ENCODE measurements at regions of chr7 and their contacts with region 1.

Region 1: GRCh38 chr7:102152672-102153585 is 133.7 kb upstream of the SH2B2 start:
- H3K4me3 ChIP-seq: no peak overlapping the region
- H3K27ac ChIP-seq: no peak overlapping the region
- H3K4me1 ChIP-seq: no peaks in the 10 kb centered on the region; the same call in 1 of the 2 replicates
- CTCF ChIP-seq: no peak

Region 2: GRCh38 chr7:102165136-102165535 is 12.2 kb after region 1 on chr7:
- CTCF ChIA-PET with region 1: no interaction called
- POLR2A ChIA-PET with region 1: interaction called, 11 read pairs
- H3K4me3 ChIP-seq: no peak overlapping the region
- H3K27ac ChIP-seq: no peak overlapping the region
- H3K4me1 ChIP-seq: no peaks in the 10 kb centered on the region
- CTCF ChIP-seq: no peak

Measured in HEK293 (cell line).